HCT116 (cell line): ENCODE measurements at regions of chr15 and their contacts with region 1.

Region 1: DNA sequence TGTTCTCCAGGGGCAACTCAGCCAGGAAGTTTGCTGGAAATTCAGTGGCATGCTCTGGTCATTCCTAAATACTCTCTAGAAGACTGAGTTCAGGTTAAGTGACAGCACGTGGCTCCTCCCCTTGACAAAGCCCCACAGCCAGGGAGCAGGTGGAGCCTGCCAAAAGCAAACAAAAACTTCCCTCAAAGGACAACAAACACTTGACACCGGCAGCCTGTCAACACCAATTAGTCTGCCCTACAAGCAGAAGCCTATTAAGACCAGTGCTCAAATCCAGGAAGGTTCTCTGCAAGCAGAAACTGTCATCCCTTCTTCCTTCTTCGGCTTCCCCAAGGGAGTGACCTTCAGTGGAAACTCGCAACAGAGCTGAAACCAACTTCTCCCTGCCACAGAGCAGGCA is 5.0 kb downstream of the MEX3B start:
- DNase-seq: no peak
- ATAC-seq: no peak; the same call in 1 of the 2 replicates
- H3K4me3 ChIP-seq: no peak overlapping the region
- H3K27ac ChIP-seq: no peak overlapping the region
- H3K4me1 ChIP-seq: peaks cover 11 to 15% of the 10 kb centered on the region in 2 experiments
- H3K27me3 ChIP-seq: no peaks in the 10 kb centered on the region; the same call in 1 of the 2 replicates
- CTCF ChIP-seq: no peak
- POLR2A ChIP-seq: no peak
- RAD21 ChIP-seq: no peak

Region 2: DNA sequence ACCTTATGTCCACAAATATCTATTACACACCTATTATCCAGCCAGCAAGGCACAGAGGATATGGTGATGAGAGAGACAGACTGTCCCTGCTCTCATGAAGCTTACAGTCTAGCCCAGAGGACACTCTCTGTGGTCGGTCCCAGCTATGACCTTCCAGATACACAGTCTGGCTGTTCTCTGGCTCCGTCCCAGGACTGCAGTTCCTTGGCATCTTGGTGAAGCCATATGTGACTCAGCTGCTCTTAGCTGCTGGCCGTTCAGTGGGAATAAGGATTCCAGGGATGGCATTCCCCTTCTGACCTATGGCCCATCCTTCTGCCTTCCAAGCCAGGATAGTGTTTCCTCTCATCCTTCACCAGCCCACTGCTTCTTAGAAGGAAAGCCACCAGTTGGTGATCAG is 25.9 kb before region 1 on chr15:
- CTCF ChIA-PET with region 1: interaction called, 3 read pairs
- POLR2A ChIA-PET with region 1: no interaction called
- RAD21 ChIA-PET with region 1: no interaction called
- intact Hi-C with region 1: loop called (anchors 1 kb)
- DNase-seq: no peak
- ATAC-seq: no peak
- H3K4me3 ChIP-seq: no peak overlapping the region
- H3K27ac ChIP-seq: no peak overlapping the region
- H3K4me1 ChIP-seq: no peaks in the 10 kb centered on the region
- H3K27me3 ChIP-seq: peaks cover 5% of the 10 kb centered on the region; the same call in 1 of the 2 replicates
- CTCF ChIP-seq: no peak
- POLR2A ChIP-seq: no peak
- RAD21 ChIP-seq: no peak

Region 3: GRCh38 chr15:82093774-82094211 is 52.9 kb after region 1 on chr15:
- CTCF ChIA-PET with region 1: no interaction called
- POLR2A ChIA-PET with region 1: no interaction called
- RAD21 ChIA-PET with region 1: no interaction called
- intact Hi-C with region 1: no loop called
- DNase-seq: no peak
- ATAC-seq: no peak
- H3K4me3 ChIP-seq: no peak overlapping the region
- H3K27ac ChIP-seq: no peak overlapping the region
- H3K4me1 ChIP-seq: no peaks in the 10 kb centered on the region
- H3K27me3 ChIP-seq: no peaks in the 10 kb centered on the region
- CTCF ChIP-seq: no peak
- POLR2A ChIP-seq: no peak
- RAD21 ChIP-seq: no peak

Region 4: DNA sequence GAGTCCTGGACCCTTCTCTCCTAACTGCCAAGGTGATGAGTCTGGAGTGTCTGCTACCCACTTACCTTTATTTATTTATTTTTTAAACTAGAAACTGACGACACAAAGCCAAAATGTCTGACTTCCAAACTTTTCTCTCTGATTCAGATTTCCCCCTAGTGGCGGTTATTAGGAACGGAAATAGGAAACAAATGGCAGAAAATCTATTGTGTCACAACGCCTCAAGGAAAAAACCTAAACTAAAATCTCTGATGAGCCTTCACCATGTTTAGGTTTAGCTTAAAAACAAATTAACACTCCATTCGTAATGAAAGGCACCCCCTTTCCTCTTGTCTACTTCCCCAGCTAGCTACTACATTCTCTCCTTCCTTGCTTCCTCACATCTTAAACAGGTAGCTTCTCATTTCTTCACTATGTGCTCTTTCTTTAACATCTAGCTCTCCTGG is 99.0 kb after region 1 on chr15:
- CTCF ChIA-PET with region 1: no interaction called
- POLR2A ChIA-PET with region 1: no interaction called
- RAD21 ChIA-PET with region 1: no interaction called
- intact Hi-C with region 1: no loop called
- DNase-seq: peak; percentile 33
- ATAC-seq: peak; percentile 63
- H3K4me3 ChIP-seq: no peak overlapping the region
- H3K27ac ChIP-seq: no peak overlapping the region
- H3K4me1 ChIP-seq: no peaks in the 10 kb centered on the region
- H3K27me3 ChIP-seq: no peaks in the 10 kb centered on the region
- CTCF ChIP-seq: peak; percentile 71 to 74 (median 74); a peak in 5 of 6 replicates
- POLR2A ChIP-seq: no peak
- RAD21 ChIP-seq: peak; percentile 70